Posterior vena cava (tissue), 2 donors: ENCODE measurements at regions of chr2 and their contacts with region 1.

Region 1: GRCh38 chr2:4427083-4427482 is 723.7 kb downstream of the DCDC2C start:
- DNase-seq: no peak

Region 2: DNA sequence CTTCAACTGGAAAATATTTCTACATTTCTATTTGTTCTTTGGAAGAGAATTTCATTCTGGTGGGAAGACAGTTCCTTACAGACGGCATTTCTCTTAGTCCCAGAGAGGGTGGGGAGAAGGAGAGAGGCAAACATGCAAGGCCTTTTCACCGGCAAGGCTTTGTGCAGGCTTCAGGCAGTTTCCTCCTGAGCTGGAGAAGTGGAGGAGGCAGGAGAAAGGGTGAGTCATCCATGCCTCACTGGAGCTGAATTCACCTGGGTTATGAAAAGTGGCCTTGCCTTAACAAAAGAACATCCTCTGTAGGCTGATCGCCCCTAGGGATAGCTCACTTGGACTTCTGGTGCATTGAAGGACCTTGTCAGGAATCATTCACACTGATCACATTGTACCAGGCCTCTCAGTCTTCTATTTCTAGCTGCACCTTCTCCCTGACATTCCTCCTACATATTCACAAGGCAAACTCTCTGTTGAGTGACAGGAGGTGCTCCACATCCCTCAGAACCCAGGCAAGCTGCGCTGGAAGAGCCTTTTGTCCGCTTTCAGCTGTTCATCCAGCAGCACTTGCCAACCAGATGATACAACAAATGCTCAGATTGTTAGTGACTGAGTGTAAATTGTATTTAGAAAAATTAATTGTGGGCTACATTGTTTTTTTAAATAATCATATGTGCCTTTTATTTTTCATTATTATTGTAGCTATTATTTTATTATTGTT is 72.4 kb after region 1 on chr2:
- intact Hi-C with region 1: loop called in 1 of 2 experiments (anchors 2 kb)
- DNase-seq: no peak

Region 3: GRCh38 chr2:4693266-4693812 is 266.3 kb after region 1 on chr2:
- intact Hi-C with region 1: no loop called
- DNase-seq: peak; percentile 73